A673 (cell line): ENCODE measurements at regions of chr14 and their contacts with region 1.

Region 1: DNA sequence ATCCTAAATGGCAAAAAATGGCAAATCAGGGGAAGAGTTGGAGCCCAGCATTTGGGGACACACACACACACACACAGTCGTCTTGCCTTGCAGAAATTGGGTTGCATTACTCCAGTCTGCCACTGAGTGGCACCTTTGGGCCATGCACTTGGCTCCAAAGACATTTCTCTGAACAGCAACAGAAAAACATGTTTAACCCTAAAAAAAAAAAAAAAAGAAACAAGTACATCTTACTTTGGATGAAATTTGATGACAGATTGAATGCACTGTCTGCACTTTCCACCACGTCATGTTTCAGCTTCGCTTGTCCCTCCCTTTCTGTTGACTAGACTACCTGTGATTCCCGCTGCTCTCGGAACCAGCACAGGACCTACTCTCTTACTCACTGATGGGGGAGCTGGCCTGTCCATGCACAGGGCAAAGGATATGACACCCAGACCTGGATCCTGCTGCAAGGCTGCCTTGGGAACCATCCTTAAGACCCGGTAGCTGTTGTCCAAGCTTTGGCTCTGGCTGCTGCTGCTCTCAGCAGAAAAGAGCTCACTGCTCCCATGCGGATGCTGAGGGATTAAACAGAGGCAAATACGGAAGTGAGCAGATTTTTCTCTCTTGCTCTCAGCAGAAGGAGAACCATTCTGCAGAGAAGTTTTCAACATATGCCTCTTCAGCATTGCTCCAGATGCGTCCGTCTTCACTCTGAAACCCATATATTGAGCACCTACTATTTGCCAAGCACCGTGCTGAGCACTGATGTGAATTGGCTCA is 376.8 kb downstream of the DPF3 start:
- DNase-seq: peak; percentile 85
- H3K4me3 ChIP-seq: no peak overlapping the region
- H3K27ac ChIP-seq: no peak overlapping the region
- H3K4me1 ChIP-seq: no peaks in the 10 kb centered on the region
- H3K27me3 ChIP-seq: no peaks in the 10 kb centered on the region
- CTCF ChIP-seq: peak; percentile 89

Region 2: GRCh38 chr14:72111911-72112310 is 405.2 kb before region 1 on chr14:
- CTCF ChIA-PET with region 1: no interaction called
- POLR2A ChIA-PET with region 1: no interaction called
- intact Hi-C with region 1: no loop called
- DNase-seq: no peak
- H3K4me3 ChIP-seq: no peak overlapping the region
- H3K27ac ChIP-seq: no peak overlapping the region
- H3K4me1 ChIP-seq: no peaks in the 10 kb centered on the region
- H3K27me3 ChIP-seq: peaks cover 17% of the 10 kb centered on the region
- CTCF ChIP-seq: no peak

Region 3: DNA sequence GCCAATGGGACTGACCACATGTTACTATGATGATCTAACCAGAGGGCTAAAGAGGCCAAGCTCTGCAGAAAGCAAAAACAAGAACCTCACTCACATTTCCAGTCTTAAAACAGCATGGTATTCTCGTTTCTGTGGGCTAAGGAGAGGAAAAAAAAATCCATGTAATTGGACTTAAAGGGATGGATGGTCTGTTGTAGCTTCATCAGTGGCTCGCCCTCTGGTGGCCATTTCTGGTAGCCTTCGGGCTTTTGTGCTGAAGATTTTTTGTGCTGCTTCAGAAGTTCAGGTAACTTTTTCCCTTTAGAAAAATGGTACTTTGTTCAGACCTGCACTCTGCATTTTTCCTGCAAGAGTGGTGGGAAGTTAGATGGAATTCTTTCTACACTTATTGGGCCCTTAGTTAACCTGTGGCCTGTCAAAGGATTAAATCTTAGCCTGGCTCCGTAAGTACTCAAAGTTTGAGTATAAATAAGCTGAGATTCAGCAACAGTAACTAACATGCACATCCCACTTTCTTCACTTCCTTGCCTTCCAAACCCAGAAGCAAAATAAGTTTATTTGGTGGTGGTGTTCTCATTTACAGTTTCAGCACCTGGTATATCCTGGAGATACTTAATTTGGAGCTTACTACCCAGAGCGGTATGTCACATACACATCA is 431.5 kb after region 1 on chr14:
- CTCF ChIA-PET with region 1: interaction called, 61 read pairs
- POLR2A ChIA-PET with region 1: no interaction called
- intact Hi-C with region 1: loop called (anchors 1 kb)
- DNase-seq: peak; percentile 64
- H3K4me3 ChIP-seq: no peak overlapping the region
- H3K27ac ChIP-seq: no peak overlapping the region
- H3K4me1 ChIP-seq: no peaks in the 10 kb centered on the region
- H3K27me3 ChIP-seq: no peaks in the 10 kb centered on the region
- CTCF ChIP-seq: peak; percentile 93